ENCODE measurements at regions of chr5 and their contacts with region 1.

Region 1: GRCh38 chr5:61162010-61162831 is at the start of gene SMIM15:
- DNase-seq: peak; percentile 60 to 89 (median 75)
- ATAC-seq: peak; percentile 85
- H3K4me3 ChIP-seq: peak within 1 kb of the TSS; percentile 73
- H3K4me3 Mint-ChIP-seq: peak within 1 kb of the TSS; percentile 94
- H3K27ac ChIP-seq: peak within 1 kb of the TSS; percentile 69 to 77
- H3K27ac Mint-ChIP-seq: peak within 1 kb of the TSS; percentile 84
- H3K4me1 ChIP-seq: peaks cover 7% of the 10 kb centered on the region
- H3K4me1 Mint-ChIP-seq: peaks cover 50% of the 10 kb centered on the region
- H3K27me3 ChIP-seq: no peaks in the 10 kb centered on the region
- H3K27me3 Mint-ChIP-seq: no peaks in the 10 kb centered on the region
- CTCF ChIP-seq: no peak
- total RNA-seq, gene SMIM15: 16.5 to 18.2 TPM

Region 2: DNA sequence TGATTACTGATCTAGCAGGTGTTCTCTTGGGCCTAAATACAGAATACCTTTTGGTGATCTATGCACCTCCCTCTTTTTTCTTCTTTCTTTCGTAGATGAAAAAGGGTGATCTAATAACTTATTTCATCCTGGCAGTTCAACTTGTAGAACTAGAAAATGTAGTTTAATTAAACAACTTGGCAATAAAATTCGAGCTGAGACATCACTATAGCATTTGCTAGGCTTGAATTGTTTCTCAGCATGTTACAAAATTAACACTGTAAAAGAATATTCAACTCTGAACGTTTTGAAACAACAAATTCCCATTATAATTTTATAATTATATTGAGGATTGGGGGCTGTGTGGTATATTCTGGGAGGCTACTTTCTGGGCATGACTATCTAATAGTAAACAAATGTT is 19.4 kb before region 1 on chr5:
- CTCF ChIA-PET with region 1: no interaction called
- POLR2A ChIA-PET with region 1: no interaction called
- intact Hi-C with region 1: no loop called
- DNase-seq: no peak
- ATAC-seq: no peak
- H3K4me3 ChIP-seq: no peak overlapping the region
- H3K4me3 Mint-ChIP-seq: no peak overlapping the region
- H3K27ac ChIP-seq: no peak overlapping the region
- H3K27ac Mint-ChIP-seq: no peak overlapping the region
- H3K4me1 ChIP-seq: no peaks in the 10 kb centered on the region
- H3K4me1 Mint-ChIP-seq: no peaks in the 10 kb centered on the region
- H3K27me3 ChIP-seq: no peaks in the 10 kb centered on the region
- H3K27me3 Mint-ChIP-seq: no peaks in the 10 kb centered on the region
- CTCF ChIP-seq: no peak

Region 3: GRCh38 chr5:61401726-61402125 is 239.5 kb after region 1 on chr5:
- CTCF ChIA-PET with region 1: no interaction called
- POLR2A ChIA-PET with region 1: no interaction called
- intact Hi-C with region 1: loop called in 1 of 2 experiments (anchors 5 kb)
- DNase-seq: no peak
- ATAC-seq: no peak
- H3K4me3 ChIP-seq: no peak overlapping the region
- H3K4me3 Mint-ChIP-seq: no peak overlapping the region
- H3K27ac ChIP-seq: no peak overlapping the region
- H3K27ac Mint-ChIP-seq: no peak overlapping the region
- H3K4me1 ChIP-seq: no peaks in the 10 kb centered on the region
- H3K4me1 Mint-ChIP-seq: peaks cover 22% of the 10 kb centered on the region
- H3K27me3 ChIP-seq: no peaks in the 10 kb centered on the region
- H3K27me3 Mint-ChIP-seq: no peaks in the 10 kb centered on the region
- CTCF ChIP-seq: no peak

Region 4: GRCh38 chr5:61423487-61424145 is 261.4 kb after region 1 on chr5:
- CTCF ChIA-PET with region 1: no interaction called
- POLR2A ChIA-PET with region 1: no interaction called
- intact Hi-C with region 1: no loop called
- DNase-seq: no peak
- ATAC-seq: no peak
- H3K4me3 ChIP-seq: no peak overlapping the region
- H3K4me3 Mint-ChIP-seq: no peak overlapping the region
- H3K27ac ChIP-seq: no peak overlapping the region
- H3K27ac Mint-ChIP-seq: no peak overlapping the region
- H3K4me1 ChIP-seq: peaks cover 10% of the 10 kb centered on the region
- H3K4me1 Mint-ChIP-seq: peaks cover 45% of the 10 kb centered on the region
- H3K27me3 ChIP-seq: no peaks in the 10 kb centered on the region
- H3K27me3 Mint-ChIP-seq: no peaks in the 10 kb centered on the region
- CTCF ChIP-seq: no peak

Region 5: GRCh38 chr5:61625681-61626621 is 463.7 kb after region 1 on chr5:
- CTCF ChIA-PET with region 1: no interaction called
- POLR2A ChIA-PET with region 1: no interaction called
- intact Hi-C with region 1: no loop called
- DNase-seq: peak in 6 of 14 experiments; percentile 4 to 38 (median 18)
- ATAC-seq: no peak
- H3K4me3 ChIP-seq: peak overlapping the region; percentile 54
- H3K4me3 Mint-ChIP-seq: peak overlapping the region; percentile 82
- H3K27ac ChIP-seq: no peak overlapping the region
- H3K27ac Mint-ChIP-seq: no peak overlapping the region
- H3K4me1 ChIP-seq: peaks cover 16% of the 10 kb centered on the region
- H3K4me1 Mint-ChIP-seq: peaks cover 11% of the 10 kb centered on the region
- H3K27me3 ChIP-seq: peaks cover 23 to 26% of the 10 kb centered on the region in 2 experiments
- H3K27me3 Mint-ChIP-seq: peaks cover 60% of the 10 kb centered on the region
- CTCF ChIP-seq: no peak

Measured in CD4-positive, alpha-beta T cell (primary cell).